BJ (cell line): ENCODE measurements at regions of chr7 and their contacts with region 1.

Region 1: DNA sequence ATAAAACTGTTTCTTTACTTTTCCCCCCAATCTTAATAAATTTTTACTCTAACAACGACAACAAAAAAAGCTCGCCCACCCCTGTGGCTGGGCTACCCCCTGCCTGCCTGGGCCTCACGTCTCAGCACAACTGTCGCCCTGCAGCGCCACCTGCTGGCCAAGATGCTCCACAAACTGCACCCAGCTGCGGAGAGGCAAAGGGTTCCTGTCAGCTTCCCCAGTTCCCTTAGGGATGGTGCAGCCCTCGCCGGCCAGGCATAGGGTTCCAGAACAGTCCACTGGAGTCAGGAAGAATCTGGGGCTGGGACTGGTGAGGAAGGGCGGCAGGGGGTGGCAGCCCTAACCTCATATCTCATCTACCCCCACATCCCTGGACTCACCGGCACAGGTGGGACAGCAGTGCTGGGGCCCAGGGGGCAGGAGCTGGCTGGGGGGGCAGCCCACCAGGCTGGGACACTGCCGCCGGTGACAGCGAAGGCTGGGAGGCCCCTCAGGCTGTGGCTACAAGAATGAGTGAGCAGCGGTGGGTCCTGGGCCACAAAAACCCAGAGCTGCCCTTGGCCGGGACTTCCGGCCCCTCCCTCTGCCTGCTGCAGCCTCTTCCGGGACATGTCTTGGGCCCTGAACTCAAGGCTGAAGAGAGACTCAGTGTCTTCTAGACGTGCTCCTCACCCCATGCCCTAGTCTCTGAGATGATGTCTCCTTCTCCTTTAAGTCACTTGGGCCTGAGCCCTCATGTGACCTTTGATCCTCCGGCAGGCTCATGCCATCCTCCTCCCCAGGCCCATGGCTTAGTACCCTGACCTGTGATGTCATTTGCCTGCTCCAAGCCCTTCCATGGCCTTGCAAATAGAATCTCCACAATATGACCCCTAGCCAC is 21.2 kb downstream of the ATP6V1F start:
- DNase-seq: no peak
- H3K4me3 ChIP-seq: no peak overlapping the region
- H3K27me3 ChIP-seq: 0 out of 2 replicates have a peak, but pooled peaks cover 2% of the 10 kb centered on the region
- CTCF ChIP-seq: peak; percentile 90

Region 2: GRCh38 chr7:128770233-128770632 is 113.6 kb before region 1 on chr7:
- CTCF ChIA-PET with region 1: no interaction called
- POLR2A ChIA-PET with region 1: no interaction called
- DNase-seq: no peak
- H3K4me3 ChIP-seq: no peak overlapping the region
- H3K27me3 ChIP-seq: no peaks in the 10 kb centered on the region
- CTCF ChIP-seq: no peak

Region 3: GRCh38 chr7:128849804-128850490 is 33.9 kb before region 1 on chr7:
- CTCF ChIA-PET with region 1: no interaction called
- POLR2A ChIA-PET with region 1: no interaction called
- DNase-seq: no peak
- H3K4me3 ChIP-seq: no peak overlapping the region
- H3K27me3 ChIP-seq: no peaks in the 10 kb centered on the region
- CTCF ChIP-seq: no peak

Region 4: GRCh38 chr7:128869138-128869943 is 14.5 kb before region 1 on chr7:
- CTCF ChIA-PET with region 1: interaction called, 54 read pairs
- POLR2A ChIA-PET with region 1: no interaction called
- DNase-seq: no peak
- H3K4me3 ChIP-seq: peak overlapping the region; percentile 39
- H3K27me3 ChIP-seq: peaks cover 9% of the 10 kb centered on the region
- CTCF ChIP-seq: no peak

Region 5: GRCh38 chr7:128922496-128923410 is 38.9 kb after region 1 on chr7:
- CTCF ChIA-PET with region 1: interaction called, 10 read pairs
- POLR2A ChIA-PET with region 1: no interaction called
- DNase-seq: no peak
- H3K4me3 ChIP-seq: no peak overlapping the region
- H3K27me3 ChIP-seq: peaks cover 27% of the 10 kb centered on the region
- CTCF ChIP-seq: no peak